ENCODE measurements at regions of chr11 and their contacts with region 1.

Region 1: GRCh38 chr11:102451681-102452460 is 694 bp downstream of the TMEM123 start:
- DNase-seq: peak; percentile 57 to 89 (median 78)
- ATAC-seq: peak; percentile 54
- H3K4me3 ChIP-seq: peak overlapping the region; percentile 88 to 90
- H3K4me3 Mint-ChIP-seq: peak overlapping the region; percentile 97
- H3K27ac ChIP-seq: peak overlapping the region; percentile 71 to 85
- H3K27ac Mint-ChIP-seq: peak overlapping the region; percentile 96
- H3K4me1 ChIP-seq: peaks cover 59% of the 10 kb centered on the region
- H3K4me1 Mint-ChIP-seq: peaks cover 72% of the 10 kb centered on the region
- H3K27me3 ChIP-seq: no peaks in the 10 kb centered on the region
- H3K27me3 Mint-ChIP-seq: no peaks in the 10 kb centered on the region
- CTCF ChIP-seq: peak; percentile 12

Region 2: GRCh38 chr11:102007567-102008437 is 444.1 kb before region 1 on chr11:
- CTCF ChIA-PET with region 1: no interaction called
- POLR2A ChIA-PET with region 1: no interaction called
- intact Hi-C with region 1: no loop called
- DNase-seq: peak in 2 of 9 experiments; percentile 31 to 49
- ATAC-seq: no peak
- H3K4me3 ChIP-seq: no peak overlapping the region
- H3K4me3 Mint-ChIP-seq: no peak overlapping the region
- H3K27ac ChIP-seq: no peak overlapping the region
- H3K27ac Mint-ChIP-seq: no peak overlapping the region
- H3K4me1 ChIP-seq: no peaks in the 10 kb centered on the region
- H3K4me1 Mint-ChIP-seq: no peaks in the 10 kb centered on the region
- H3K27me3 ChIP-seq: peaks cover 0 to 2% of the 10 kb centered on the region in 2 experiments
- H3K27me3 Mint-ChIP-seq: peaks cover 12% of the 10 kb centered on the region
- CTCF ChIP-seq: peak; percentile 65

Region 3: GRCh38 chr11:102287964-102288724 is 163.7 kb before region 1 on chr11:
- CTCF ChIA-PET with region 1: no interaction called
- POLR2A ChIA-PET with region 1: interaction called, 3 read pairs
- intact Hi-C with region 1: loop called in 1 of 2 experiments (anchors 5 kb)
- DNase-seq: peak in 3 of 9 experiments; percentile 34 to 85 (median 76)
- ATAC-seq: peak; percentile 89
- H3K4me3 ChIP-seq: no peak overlapping the region
- H3K4me3 Mint-ChIP-seq: peak overlapping the region; percentile 35
- H3K27ac ChIP-seq: no peak overlapping the region
- H3K27ac Mint-ChIP-seq: no peak overlapping the region
- H3K4me1 ChIP-seq: no peaks in the 10 kb centered on the region
- H3K4me1 Mint-ChIP-seq: peaks cover 12% of the 10 kb centered on the region
- H3K27me3 ChIP-seq: no peaks in the 10 kb centered on the region
- H3K27me3 Mint-ChIP-seq: no peaks in the 10 kb centered on the region
- CTCF ChIP-seq: peak; percentile 80

Region 4: DNA sequence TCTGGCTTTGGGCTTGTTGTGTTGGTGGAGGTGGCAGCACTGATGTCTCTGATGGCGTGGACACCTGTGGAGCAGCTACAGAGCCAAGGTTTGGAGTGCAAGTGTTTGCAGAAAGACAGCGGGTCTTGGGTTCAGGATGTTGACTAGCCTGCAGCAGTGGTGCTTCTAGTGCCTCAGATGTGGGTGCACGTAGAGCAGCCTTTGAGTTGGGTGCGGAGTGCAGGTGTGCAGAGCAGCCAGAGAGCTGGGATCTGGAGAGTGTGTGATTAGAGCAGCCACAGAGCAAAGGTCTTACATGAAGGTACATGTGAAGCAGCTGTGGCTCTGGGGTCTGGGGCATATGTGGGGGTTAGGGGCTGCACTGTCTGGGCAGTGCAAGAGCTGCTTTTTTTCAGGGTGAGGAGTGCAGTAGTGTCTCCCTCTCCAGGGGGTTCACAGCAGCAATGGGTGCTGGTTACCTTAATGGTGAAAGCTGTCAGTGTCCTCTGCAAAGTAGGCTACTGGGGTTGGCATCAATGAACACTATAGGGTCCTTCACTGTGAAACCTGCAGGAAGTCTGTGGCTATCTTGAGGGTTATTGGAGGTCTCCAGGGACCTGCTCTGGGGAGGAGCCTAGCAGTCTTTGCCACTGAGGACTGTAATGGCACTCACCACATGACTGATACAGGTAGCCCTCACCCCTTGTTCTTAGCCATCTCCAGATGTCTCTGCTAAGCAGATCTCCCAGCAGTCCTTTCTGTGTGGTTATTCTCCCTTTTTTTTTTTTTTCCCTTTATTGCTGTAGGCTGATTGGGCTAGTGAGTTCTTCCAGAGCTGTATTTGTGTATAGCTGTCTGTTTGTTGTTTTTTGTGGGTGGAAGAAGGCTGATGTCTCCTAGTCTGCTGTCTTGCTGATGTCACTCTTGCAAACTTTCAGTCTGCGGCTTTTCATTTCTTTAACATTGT is 90.5 kb before region 1 on chr11:
- CTCF ChIA-PET with region 1: interaction called, 11 read pairs
- POLR2A ChIA-PET with region 1: interaction called, 12 read pairs
- intact Hi-C with region 1: loop called (anchors 2 to 5 kb)
- DNase-seq: peak; percentile 9 to 85 (median 59)
- ATAC-seq: peak; percentile 77
- H3K4me3 ChIP-seq: peak overlapping the region in 1 of 2 experiments; percentile 26
- H3K4me3 Mint-ChIP-seq: peak overlapping the region; percentile 58
- H3K27ac ChIP-seq: peak overlapping the region; percentile 54 to 80
- H3K27ac Mint-ChIP-seq: peak overlapping the region; percentile 96
- H3K4me1 ChIP-seq: peaks cover 45% of the 10 kb centered on the region
- H3K4me1 Mint-ChIP-seq: peaks cover 64% of the 10 kb centered on the region
- H3K27me3 ChIP-seq: no peaks in the 10 kb centered on the region
- H3K27me3 Mint-ChIP-seq: no peaks in the 10 kb centered on the region
- CTCF ChIP-seq: no peak

Region 5: DNA sequence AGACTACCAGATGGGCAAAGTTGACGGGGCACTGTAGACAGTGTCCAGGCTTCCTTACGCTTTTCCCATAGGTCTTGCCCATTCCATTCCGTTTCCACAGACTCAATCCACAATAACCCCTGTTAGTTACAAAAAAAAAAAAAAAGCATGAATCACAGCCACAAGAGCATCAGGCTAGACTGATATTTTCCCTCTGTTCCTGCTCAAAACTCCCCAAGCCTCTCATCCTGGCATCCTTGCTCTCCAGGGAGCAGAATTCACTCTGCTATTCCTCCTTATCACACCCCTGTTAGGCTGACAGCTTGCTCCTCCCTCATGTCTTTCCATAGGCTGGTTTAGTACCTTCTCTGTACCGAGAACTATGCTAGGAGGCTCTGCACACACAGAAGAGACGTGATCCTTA is 41.5 kb before region 1 on chr11:
- CTCF ChIA-PET with region 1: interaction called, 3 read pairs
- POLR2A ChIA-PET with region 1: interaction called, 6 read pairs
- intact Hi-C with region 1: loop called in 1 of 2 experiments (anchors 5 kb)
- DNase-seq: no peak
- ATAC-seq: no peak
- H3K4me3 ChIP-seq: no peak overlapping the region
- H3K4me3 Mint-ChIP-seq: peak overlapping the region; percentile 6
- H3K27ac ChIP-seq: no peak overlapping the region
- H3K27ac Mint-ChIP-seq: peak overlapping the region; percentile 69
- H3K4me1 ChIP-seq: peaks cover 78% of the 10 kb centered on the region
- H3K4me1 Mint-ChIP-seq: peaks cover 91% of the 10 kb centered on the region
- H3K27me3 ChIP-seq: no peaks in the 10 kb centered on the region
- H3K27me3 Mint-ChIP-seq: no peaks in the 10 kb centered on the region
- CTCF ChIP-seq: no peak

Region 6: GRCh38 chr11:102430158-102430836 is 21.6 kb before region 1 on chr11:
- CTCF ChIA-PET with region 1: interaction called, 4 read pairs
- POLR2A ChIA-PET with region 1: interaction called, 6 read pairs
- intact Hi-C with region 1: loop called in 1 of 2 experiments (anchors 2 kb)
- DNase-seq: peak in 1 of 9 experiments; percentile 61
- ATAC-seq: peak; percentile 47
- H3K4me3 ChIP-seq: no peak overlapping the region
- H3K4me3 Mint-ChIP-seq: peak overlapping the region; percentile 2
- H3K27ac ChIP-seq: peak overlapping the region in 1 of 2 experiments; percentile 34
- H3K27ac Mint-ChIP-seq: peak overlapping the region; percentile 81
- H3K4me1 ChIP-seq: peaks cover 50% of the 10 kb centered on the region
- H3K4me1 Mint-ChIP-seq: peaks cover 71% of the 10 kb centered on the region
- H3K27me3 ChIP-seq: no peaks in the 10 kb centered on the region
- H3K27me3 Mint-ChIP-seq: no peaks in the 10 kb centered on the region
- CTCF ChIP-seq: no peak

Region 7: DNA sequence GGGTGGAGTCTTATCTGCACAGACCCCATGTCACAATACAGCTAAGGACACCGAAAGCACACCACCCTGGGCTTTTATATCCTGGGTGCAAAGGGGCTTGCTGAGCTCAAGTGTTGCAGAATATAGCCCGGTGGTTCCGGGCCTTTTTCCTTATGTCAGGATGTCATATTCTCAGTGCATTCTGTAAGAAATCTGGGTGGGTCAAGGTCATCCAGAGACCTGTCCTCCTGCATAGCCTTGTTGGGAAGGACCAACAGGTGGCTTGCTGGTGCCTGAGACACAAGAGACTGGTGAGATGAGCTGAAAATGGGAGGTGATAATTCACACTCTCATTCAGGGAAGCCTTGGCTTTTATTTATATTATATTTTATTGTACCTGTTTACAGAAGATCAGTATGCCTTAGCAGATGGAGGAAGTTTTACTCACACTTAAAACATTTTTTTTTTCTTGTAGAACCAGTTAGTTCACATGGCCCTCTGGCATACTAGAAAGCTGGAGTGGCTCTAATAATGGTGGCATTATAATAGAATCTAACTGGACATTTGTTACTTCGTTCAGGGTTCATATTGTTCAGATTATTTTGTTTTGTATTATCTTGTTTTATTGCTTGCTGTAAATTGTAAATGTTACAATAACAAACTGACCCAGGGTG is 15.3 kb after region 1 on chr11:
- CTCF ChIA-PET with region 1: interaction called, 6 read pairs
- POLR2A ChIA-PET with region 1: interaction called, 14 read pairs
- intact Hi-C with region 1: loop called in 1 of 2 experiments (anchors 1 kb)
- DNase-seq: no peak
- ATAC-seq: no peak
- H3K4me3 ChIP-seq: no peak overlapping the region
- H3K4me3 Mint-ChIP-seq: no peak overlapping the region
- H3K27ac ChIP-seq: no peak overlapping the region
- H3K27ac Mint-ChIP-seq: no peak overlapping the region
- H3K4me1 ChIP-seq: peaks cover 79% of the 10 kb centered on the region
- H3K4me1 Mint-ChIP-seq: peaks cover 89% of the 10 kb centered on the region
- H3K27me3 ChIP-seq: no peaks in the 10 kb centered on the region
- H3K27me3 Mint-ChIP-seq: no peaks in the 10 kb centered on the region
- CTCF ChIP-seq: no peak

Region 8: GRCh38 chr11:102510439-102511135 is 58.7 kb after region 1 on chr11:
- CTCF ChIA-PET with region 1: no interaction called
- POLR2A ChIA-PET with region 1: no interaction called
- intact Hi-C with region 1: no loop called
- DNase-seq: no peak
- ATAC-seq: no peak
- H3K4me3 ChIP-seq: no peak overlapping the region
- H3K4me3 Mint-ChIP-seq: no peak overlapping the region
- H3K27ac ChIP-seq: no peak overlapping the region
- H3K27ac Mint-ChIP-seq: no peak overlapping the region
- H3K4me1 ChIP-seq: no peaks in the 10 kb centered on the region
- H3K4me1 Mint-ChIP-seq: no peaks in the 10 kb centered on the region
- H3K27me3 ChIP-seq: no peaks in the 10 kb centered on the region
- H3K27me3 Mint-ChIP-seq: peaks cover 2% of the 10 kb centered on the region
- CTCF ChIP-seq: no peak

Region 9: GRCh38 chr11:103108933-103109817 is 657.3 kb after region 1 on chr11 and contains the start of gene DYNC2H1:
- CTCF ChIA-PET with region 1: no interaction called
- POLR2A ChIA-PET with region 1: interaction called, 3 read pairs
- intact Hi-C with region 1: loop called in 1 of 2 experiments (anchors 5 kb)
- DNase-seq: peak; percentile 73 to 94 (median 86)
- ATAC-seq: peak; percentile 91
- H3K4me3 ChIP-seq: peak within 1 kb of the TSS; percentile 67 to 76
- H3K4me3 Mint-ChIP-seq: peak within 1 kb of the TSS; percentile 93
- H3K27ac ChIP-seq: peak within 1 kb of the TSS; percentile 64 to 67
- H3K27ac Mint-ChIP-seq: peak within 1 kb of the TSS; percentile 85
- H3K4me1 ChIP-seq: no peaks in the 10 kb centered on the region
- H3K4me1 Mint-ChIP-seq: peaks cover 14% of the 10 kb centered on the region
- H3K27me3 ChIP-seq: no peaks in the 10 kb centered on the region
- H3K27me3 Mint-ChIP-seq: peaks cover 4% of the 10 kb centered on the region
- CTCF ChIP-seq: peak; percentile 36
- total RNA-seq, gene DYNC2H1: 1.7 to 2.3 TPM

Measured in CD8-positive, alpha-beta T cell (primary cell).